ENCODE measurements at regions of chr4 and their contacts with region 1.

Region 1: GRCh38 chr4:145732895-145733880 is 53.2 kb downstream of the C4orf51 start:
- DNase-seq: peak; percentile 75 to 98
- H3K4me3 ChIP-seq: peak overlapping the region; percentile 74 to 77
- H3K27ac ChIP-seq: peak overlapping the region; percentile 99
- H3K4me1 ChIP-seq: peaks cover 13 to 32% of the 10 kb centered on the region in 2 donors
- H3K27me3 ChIP-seq: no peaks in the 10 kb centered on the region
- CTCF ChIP-seq: peak in 1 of 3 experiments; percentile 5

Region 2: DNA sequence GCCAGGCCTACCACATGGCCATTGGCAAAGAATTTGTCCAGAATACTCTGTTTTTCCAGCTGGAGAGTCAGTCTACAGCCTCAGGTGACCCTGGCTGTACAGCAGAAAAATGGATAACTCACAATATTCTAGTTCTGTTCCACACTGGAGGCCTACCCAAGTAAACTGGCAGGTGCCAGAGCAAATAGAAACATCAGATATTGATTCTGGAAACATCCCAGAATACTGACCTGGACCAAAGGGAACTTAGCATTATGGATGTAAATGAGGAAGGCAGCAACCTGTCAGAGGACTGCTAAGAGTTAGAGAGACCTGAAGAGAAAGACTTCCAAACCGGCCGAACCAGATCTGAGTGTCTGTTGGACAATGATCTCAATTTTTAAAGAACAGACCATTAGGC is 399.4 kb before region 1 on chr4:
- intact Hi-C with region 1: no loop called
- DNase-seq: no peak
- H3K4me3 ChIP-seq: no peak overlapping the region
- H3K27ac ChIP-seq: no peak overlapping the region
- H3K4me1 ChIP-seq: no peaks in the 10 kb centered on the region
- H3K27me3 ChIP-seq: no peaks in the 10 kb centered on the region
- CTCF ChIP-seq: no peak

Region 3: GRCh38 chr4:145481164-145481941 is 251.8 kb before region 1 on chr4 and contains the start of gene SMAD1:
- intact Hi-C with region 1: loop called (anchors 2 kb)
- DNase-seq: peak in 1 of 2 donors; percentile 89
- H3K4me3 ChIP-seq: peak within 1 kb of the TSS; percentile 96 to 99
- H3K27ac ChIP-seq: peak within 1 kb of the TSS; percentile 97
- H3K4me1 ChIP-seq: no peaks in the 10 kb centered on the region
- H3K27me3 ChIP-seq: no peaks in the 10 kb centered on the region
- CTCF ChIP-seq: no peak
- total RNA-seq, gene SMAD1: 20.1 TPM

Region 4: GRCh38 chr4:145804116-145804515 is 70.9 kb after region 1 on chr4:
- intact Hi-C with region 1: loop called (anchors 2 kb)
- DNase-seq: no peak
- H3K4me3 ChIP-seq: no peak overlapping the region
- H3K27ac ChIP-seq: peak overlapping the region in 1 of 2 donors; percentile 41
- H3K4me1 ChIP-seq: peaks cover 0 to 8% of the 10 kb centered on the region in 2 donors
- H3K27me3 ChIP-seq: no peaks in the 10 kb centered on the region
- CTCF ChIP-seq: no peak

Region 5: DNA sequence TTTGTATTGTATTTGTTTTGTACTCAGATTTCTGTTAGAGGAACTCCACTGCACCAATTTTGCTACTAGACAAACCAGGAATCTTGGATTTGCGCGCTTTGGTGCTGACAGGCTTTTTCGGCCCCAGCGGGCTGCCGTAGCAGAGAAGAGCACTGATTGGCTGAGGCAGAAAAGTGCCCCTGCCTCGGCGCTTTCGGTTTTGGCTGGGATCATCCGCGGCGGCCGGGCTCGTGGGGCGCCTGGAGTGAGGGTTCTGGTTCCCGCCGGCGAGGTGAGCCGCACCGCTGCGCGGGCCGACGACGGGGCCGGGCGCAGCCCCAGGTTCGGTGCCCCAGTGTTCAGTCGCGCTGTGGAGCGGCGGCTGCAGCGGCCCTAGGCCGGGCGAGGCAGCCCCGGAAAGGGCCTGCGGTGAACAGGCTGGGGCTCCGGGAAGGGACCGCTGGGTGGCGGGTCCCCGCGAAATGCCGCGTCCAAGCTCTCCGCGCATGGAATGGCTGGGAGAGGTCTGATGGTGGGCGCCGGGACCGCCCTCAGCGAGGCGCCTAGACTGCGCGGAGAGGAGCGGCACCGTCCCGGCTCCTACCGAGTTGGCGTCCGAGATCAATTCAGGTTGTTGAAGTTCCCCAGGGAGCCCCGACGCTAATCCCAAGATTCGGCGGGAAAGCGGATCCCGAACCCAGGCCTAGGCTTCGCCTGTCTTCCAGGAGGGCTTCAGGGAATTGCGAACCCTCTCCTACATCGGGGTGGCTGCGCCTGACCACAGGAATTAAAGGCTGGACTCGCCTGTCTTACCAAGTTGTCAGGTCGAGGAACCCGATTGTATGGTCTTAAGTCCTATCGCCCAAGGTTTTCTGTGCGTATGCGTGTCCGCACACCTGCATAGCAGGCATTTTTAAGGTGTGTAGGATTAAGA is 442.6 kb after region 1 on chr4 and contains the start of gene LSM6:
- intact Hi-C with region 1: loop called (anchors 5 kb)
- DNase-seq: peak; percentile 39 to 91
- H3K4me3 ChIP-seq: peak within 1 kb of the TSS; percentile 95 to 99
- H3K27ac ChIP-seq: peak within 1 kb of the TSS; percentile 95
- H3K4me1 ChIP-seq: peaks cover 2 to 17% of the 10 kb centered on the region in 2 donors
- H3K27me3 ChIP-seq: no peaks in the 10 kb centered on the region
- CTCF ChIP-seq: peak in 1 of 3 experiments; percentile 21
- total RNA-seq, gene LSM6: 10.7 TPM

Region 6: GRCh38 chr4:147103403-147103946 is 1370.3 kb after region 1 on chr4:
- intact Hi-C with region 1: loop called (anchors 2 kb)
- DNase-seq: peak; percentile 73 to 95
- H3K4me3 ChIP-seq: no peak overlapping the region
- H3K27ac ChIP-seq: peak overlapping the region; percentile 72 to 78
- H3K4me1 ChIP-seq: peaks cover 0 to 14% of the 10 kb centered on the region in 2 donors
- H3K27me3 ChIP-seq: no peaks in the 10 kb centered on the region
- CTCF ChIP-seq: no peak

Measured in ascending aorta (tissue), 2 donors.